ENCODE measurements at regions of chr17 and their contacts with region 1.

Region 1: DNA sequence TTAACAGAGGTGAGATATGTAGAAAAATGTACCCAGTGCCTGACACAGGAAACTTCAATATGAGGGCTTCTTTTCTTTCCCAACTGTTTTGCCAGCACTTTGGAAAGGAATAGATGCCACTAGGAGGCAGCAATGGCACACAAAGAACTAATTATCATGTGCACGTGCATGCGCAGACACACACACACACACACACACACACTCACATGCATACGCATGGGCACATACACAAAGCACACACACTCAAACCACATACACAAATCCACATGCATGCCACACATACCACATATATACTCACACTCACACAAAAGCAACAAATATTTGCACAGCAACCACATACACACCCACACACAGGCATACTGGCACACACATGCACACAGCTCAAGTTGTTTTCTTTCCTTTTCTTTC is 8.8 kb upstream of the CEP112 start:
- DNase-seq: no peak
- ATAC-seq: peak; percentile 38 to 47

Region 2: GRCh38 chr17:66673668-66674315 is 473.1 kb after region 1 on chr17:
- intact Hi-C with region 1: loop called in 1 of 2 experiments (anchors 5 kb)
- DNase-seq: peak; percentile 30
- ATAC-seq: peak; percentile 69 to 84